ENCODE measurements at regions of chr15 and their contacts with region 1.

Region 1: DNA sequence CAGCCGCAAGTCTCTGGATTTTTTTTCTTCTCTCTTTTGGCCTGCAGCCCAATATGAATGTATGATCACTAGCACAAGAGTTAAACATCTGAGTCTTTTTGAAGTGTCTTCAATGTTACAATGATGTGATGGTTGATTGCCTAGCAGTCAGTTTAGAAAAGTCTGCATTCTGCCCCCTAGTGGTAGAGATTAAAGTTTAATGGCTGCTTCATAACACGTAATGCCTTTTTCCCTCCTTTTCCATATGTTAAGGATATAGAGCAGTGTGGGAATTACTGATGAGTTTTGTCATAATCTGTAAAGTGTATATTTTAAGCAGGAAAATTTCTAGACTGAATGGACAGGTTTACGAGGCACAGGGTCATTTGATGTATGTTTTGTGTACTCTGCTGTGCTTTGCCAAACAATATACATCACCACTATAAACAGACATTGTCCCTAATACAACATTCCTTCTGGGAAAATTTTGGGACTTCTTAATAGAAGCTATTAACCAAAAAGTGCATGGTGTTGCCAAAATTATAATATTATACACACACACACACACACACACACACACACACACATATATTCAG is 1038.5 kb upstream of the NR2F2 start:
- DNase-seq: peak; percentile 46
- H3K4me3 ChIP-seq: no peak overlapping the region
- CTCF ChIP-seq: peak; percentile 60

Region 2: DNA sequence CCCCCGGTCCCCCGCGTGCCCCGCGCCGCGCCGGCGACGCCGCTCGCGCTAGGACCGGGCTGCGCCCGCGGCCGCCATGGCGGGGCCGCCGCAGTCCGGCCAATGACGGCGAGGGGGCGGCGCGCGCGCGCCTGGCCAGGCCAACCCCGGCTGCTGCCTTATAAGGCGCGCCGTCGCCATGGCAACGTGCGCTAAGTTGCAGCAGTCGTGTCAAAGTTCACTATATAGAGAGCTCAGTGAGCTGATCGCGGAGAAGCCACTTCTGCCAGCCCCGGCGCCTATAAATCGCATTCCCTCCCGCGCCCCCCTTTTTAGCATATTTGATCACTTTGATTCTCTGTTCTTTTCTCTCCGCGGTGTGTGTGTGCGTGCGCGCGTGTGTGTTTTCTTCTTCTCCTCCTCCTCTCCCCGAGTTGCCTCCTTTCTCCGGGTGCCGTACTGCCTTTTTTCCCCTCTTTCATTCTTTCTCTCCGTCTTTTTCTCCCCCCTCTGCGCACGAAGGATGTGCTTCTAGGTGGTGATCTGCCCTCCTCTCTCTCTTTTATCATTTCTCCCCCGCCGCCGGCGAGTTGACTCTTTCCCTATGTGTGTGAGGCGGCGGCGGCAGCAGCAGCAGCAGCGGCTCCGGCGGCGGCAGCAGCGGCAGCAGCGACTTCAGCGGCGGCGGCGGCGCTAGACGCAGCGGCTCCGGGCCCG is 1038.6 kb after region 1 on chr15 and contains the start of gene NR2F2:
- in situ Hi-C with region 1: loop called (anchors 25 kb)
- DNase-seq: peak; percentile 100
- H3K4me3 ChIP-seq: peak within 1 kb of the TSS; percentile 99
- CTCF ChIP-seq: no peak